Activated naive CD4-positive, alpha-beta T cell treated with anti-CD3 and anti-CD28 coated beads for 36 hours (primary cell): ENCODE measurements at regions of chr6 and their contacts with region 1.

Region 1: GRCh38 chr6:24991810-24992467 is 56.2 kb upstream of the RIPOR2 start:
- DNase-seq: peak; percentile 89
- H3K4me3 Mint-ChIP-seq: peak overlapping the region; percentile 37
- H3K27ac Mint-ChIP-seq: peak overlapping the region; percentile 86
- H3K4me1 Mint-ChIP-seq: peaks cover 68% of the 10 kb centered on the region
- H3K27me3 Mint-ChIP-seq: no peaks in the 10 kb centered on the region

Region 2: GRCh38 chr6:24874776-24875534 is 117.0 kb before region 1 on chr6:
- CTCF ChIA-PET with region 1: interaction called, 13 read pairs
- intact Hi-C with region 1: no loop called
- DNase-seq: no peak
- H3K4me3 Mint-ChIP-seq: no peak overlapping the region
- H3K27ac Mint-ChIP-seq: no peak overlapping the region
- H3K4me1 Mint-ChIP-seq: peaks cover 69% of the 10 kb centered on the region
- H3K27me3 Mint-ChIP-seq: no peaks in the 10 kb centered on the region

Region 3: DNA sequence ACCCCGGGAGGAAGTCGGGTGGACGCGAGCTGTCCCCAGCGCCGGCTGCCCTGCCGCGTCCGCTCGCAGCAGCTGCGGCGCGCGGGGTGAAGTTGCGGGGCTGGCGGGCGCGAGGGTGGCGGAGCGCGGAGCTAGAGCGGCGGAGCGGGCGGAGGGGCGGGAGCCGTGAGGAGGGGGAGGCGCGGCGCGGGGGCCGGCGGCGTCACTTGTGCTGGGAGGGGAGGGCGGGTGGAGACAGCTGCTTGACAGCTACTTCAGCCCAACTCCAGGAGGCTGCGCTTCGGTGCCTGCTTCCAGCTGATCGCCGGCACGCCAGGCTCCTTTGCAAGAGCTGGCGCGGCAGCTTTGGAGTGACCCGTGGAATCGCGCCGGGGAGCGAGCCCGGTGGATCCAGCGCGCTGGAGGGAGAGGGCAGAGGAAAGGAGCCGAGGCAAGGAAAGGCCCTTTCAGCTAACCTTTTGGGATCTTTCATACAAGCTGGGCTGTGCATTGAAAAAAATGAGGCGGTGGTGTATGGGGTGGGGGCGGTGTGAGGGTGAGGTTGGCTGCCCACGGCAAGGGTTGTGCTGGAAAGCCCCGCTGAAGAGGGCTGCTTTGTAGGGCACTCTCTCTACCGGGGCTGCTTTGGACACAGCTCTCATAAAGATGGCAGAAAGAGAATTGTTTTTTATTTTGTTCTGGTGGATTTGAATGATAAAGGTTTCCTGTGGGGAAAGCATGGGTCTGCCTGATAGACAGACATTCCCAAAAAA is 80.8 kb before region 1 on chr6:
- CTCF ChIA-PET with region 1: interaction called, 57 read pairs
- intact Hi-C with region 1: loop called (anchors 1 kb)
- DNase-seq: peak; percentile 70
- H3K4me3 Mint-ChIP-seq: peak overlapping the region; percentile 92
- H3K27ac Mint-ChIP-seq: peak overlapping the region; percentile 96
- H3K4me1 Mint-ChIP-seq: peaks cover 76% of the 10 kb centered on the region
- H3K27me3 Mint-ChIP-seq: no peaks in the 10 kb centered on the region

Region 4: DNA sequence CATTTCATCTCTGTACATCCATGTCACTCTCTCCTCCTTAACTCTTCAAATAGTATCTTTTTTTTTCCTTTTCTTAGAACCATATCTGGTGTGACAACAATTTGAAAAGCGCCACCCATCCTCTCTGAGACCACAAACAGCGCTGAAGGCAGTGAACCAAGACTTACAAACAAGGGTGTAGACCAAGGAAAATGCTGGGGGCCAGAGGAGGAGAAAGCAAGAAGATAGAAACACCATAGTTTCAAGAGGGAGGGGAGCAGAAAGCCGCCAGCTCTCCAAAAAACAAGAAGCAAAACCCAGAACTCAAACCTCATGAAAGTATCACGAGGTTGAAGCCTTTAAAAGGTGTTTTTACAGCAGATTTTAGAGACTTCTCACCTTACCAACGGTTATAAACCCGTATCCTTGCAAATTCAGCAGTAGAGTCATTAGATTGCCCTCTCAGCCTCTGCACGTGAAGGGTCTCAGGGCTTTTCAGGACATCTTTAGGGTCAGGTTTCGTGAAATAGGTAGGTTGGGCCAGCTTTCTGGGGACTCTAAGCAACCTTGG is 42.8 kb before region 1 on chr6:
- CTCF ChIA-PET with region 1: interaction called, 14 read pairs
- intact Hi-C with region 1: no loop called
- DNase-seq: peak; percentile 51
- H3K4me3 Mint-ChIP-seq: peak overlapping the region; percentile 61
- H3K27ac Mint-ChIP-seq: peak overlapping the region; percentile 89
- H3K4me1 Mint-ChIP-seq: peaks cover 63% of the 10 kb centered on the region
- H3K27me3 Mint-ChIP-seq: no peaks in the 10 kb centered on the region

Region 5: DNA sequence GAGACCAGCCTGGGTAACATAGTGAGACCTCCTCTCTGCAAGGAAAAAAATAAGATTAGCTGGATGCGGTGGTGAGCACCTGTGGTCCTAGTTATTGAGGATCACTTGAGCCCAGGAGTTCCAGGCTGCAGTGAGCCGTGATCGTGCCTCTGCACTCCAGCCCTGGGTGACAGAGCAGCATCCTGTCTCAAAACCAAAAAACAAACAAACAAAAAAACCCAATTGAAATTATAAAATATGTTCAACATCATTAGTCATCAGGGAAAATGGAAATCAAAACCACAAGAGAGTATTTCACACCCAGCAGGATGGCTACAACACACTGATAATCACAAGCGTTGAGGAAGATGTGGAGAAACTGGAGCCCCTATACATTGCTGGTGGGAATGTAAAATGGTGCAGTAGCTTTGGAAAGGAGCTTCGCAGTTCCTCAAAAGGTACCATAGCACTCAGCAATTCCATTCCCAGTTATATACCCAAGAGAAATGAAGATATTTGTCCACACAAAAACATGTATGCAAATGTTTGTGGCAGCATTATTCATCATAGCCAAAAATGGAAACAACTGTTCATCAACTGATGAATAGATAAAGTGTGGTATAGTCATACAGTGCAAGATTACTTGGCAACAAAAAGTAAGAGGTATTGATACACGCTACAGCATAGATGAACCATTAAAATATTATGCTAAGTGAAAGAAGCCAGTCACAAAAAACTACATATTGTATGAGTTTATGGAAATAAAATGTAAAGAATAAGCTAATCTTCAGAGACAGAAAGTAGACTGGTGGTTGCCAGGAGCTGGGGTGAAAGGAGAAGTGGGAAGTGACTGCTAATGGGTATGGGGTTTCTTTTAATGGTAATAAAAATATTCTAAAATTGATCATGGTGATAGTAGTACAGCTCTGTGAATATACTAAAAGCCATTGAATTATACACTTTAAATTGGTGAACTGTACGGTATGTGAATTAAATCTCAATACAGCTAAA is 17.5 kb before region 1 on chr6:
- CTCF ChIA-PET with region 1: interaction called, 26 read pairs
- intact Hi-C with region 1: loop called (anchors 1 kb)
- DNase-seq: peak; percentile 59
- H3K4me3 Mint-ChIP-seq: peak overlapping the region; percentile 16
- H3K27ac Mint-ChIP-seq: peak overlapping the region; percentile 92
- H3K4me1 Mint-ChIP-seq: peaks cover 58% of the 10 kb centered on the region
- H3K27me3 Mint-ChIP-seq: no peaks in the 10 kb centered on the region

Region 6: DNA sequence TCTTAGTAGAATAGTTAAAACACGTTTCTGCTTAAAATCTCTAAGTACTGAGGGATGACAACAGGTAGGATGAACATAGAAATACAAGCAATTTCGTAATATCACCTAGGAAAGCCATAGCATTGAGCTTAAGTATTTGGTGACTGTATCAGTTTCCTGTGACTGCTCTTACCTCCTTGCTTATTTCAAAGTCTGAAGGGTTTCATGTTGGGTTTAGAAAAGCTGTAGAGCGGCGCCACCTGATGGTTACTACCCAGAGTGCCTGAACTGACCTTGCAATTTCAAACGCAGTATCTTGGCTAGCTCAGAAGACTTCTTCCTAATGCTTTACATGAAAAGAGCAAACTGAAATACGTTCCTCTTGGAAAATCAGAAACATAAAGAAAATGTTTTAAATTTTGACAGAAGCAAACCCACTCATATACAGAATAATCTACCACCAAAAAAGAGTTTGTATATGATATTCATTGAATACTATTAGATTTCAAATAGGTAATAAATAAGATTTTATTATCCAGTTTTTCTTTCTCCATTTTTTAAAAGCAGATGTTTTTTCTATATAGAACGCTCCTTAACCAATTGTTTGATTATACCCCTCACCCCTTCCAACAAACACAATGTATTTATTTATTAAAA is 26.1 kb after region 1 on chr6:
- CTCF ChIA-PET with region 1: interaction called, 38 read pairs
- intact Hi-C with region 1: loop called (anchors 1 kb)
- DNase-seq: peak; percentile 93
- H3K4me3 Mint-ChIP-seq: peak overlapping the region; percentile 6
- H3K27ac Mint-ChIP-seq: peak overlapping the region; percentile 84
- H3K4me1 Mint-ChIP-seq: peaks cover 55% of the 10 kb centered on the region
- H3K27me3 Mint-ChIP-seq: no peaks in the 10 kb centered on the region

Region 7: DNA sequence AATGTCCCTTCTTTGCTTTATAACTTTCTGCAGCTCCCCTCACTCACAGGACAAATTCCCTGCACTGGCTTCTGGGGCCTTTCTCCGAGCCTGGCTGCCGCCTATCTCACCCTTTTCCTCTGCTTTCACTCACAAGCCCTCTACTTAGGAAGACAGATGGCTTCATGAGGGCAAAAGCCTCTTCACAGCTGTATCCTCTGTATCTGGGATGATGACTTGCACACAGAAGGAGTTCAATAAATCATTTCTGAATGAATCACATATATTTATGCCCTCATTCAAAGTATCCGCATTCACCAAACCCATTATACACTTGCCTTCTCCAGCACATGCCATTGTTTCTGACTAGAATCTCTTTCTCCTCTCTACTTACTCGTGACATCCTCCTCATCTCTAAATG is 102.8 kb after region 1 on chr6:
- CTCF ChIA-PET with region 1: no interaction called
- intact Hi-C with region 1: no loop called
- DNase-seq: no peak
- H3K4me3 Mint-ChIP-seq: no peak overlapping the region
- H3K27ac Mint-ChIP-seq: no peak overlapping the region
- H3K4me1 Mint-ChIP-seq: no peaks in the 10 kb centered on the region
- H3K27me3 Mint-ChIP-seq: no peaks in the 10 kb centered on the region

Region 8: DNA sequence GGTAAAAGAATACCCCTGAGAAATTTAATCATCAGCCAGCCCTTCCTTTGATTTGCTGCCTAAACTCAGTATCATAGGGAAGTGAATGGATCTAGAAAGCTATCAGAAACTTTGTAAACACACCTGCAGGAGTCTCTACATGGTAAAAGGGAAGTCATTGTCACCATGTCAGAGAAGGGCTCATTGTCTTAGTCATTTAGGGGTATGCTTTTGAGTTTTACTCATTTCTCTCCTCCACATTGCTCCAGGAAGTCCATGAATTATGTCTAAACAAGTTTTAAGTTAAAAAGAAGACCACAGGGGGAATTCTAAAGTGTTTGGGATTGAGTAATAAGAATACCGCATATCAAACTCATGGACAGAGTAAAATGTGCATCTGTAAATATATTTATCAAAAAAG is 837.4 kb after region 1 on chr6:
- CTCF ChIA-PET with region 1: no interaction called
- intact Hi-C with region 1: no loop called
- DNase-seq: no peak
- H3K4me3 Mint-ChIP-seq: no peak overlapping the region
- H3K27ac Mint-ChIP-seq: no peak overlapping the region
- H3K4me1 Mint-ChIP-seq: peaks cover 5% of the 10 kb centered on the region
- H3K27me3 Mint-ChIP-seq: peaks cover 18% of the 10 kb centered on the region

Region 9: GRCh38 chr6:25942561-25943147 is 950.7 kb after region 1 on chr6:
- CTCF ChIA-PET with region 1: no interaction called
- intact Hi-C with region 1: no loop called
- DNase-seq: peak; percentile 12
- H3K4me3 Mint-ChIP-seq: no peak overlapping the region
- H3K27ac Mint-ChIP-seq: no peak overlapping the region
- H3K4me1 Mint-ChIP-seq: peaks cover 18% of the 10 kb centered on the region
- H3K27me3 Mint-ChIP-seq: no peaks in the 10 kb centered on the region